MCF 10A (cell line): ENCODE measurements at regions of chr13 and their contacts with region 1.

Region 1: GRCh38 chr13:23888658-23889614 is at the start of gene MIPEP:
- DNase-seq: peak; percentile 95
- H3K4me3 Mint-ChIP-seq: peak within 1 kb of the TSS; percentile 89
- H3K27ac Mint-ChIP-seq: peak within 1 kb of the TSS; percentile 67
- H3K4me1 Mint-ChIP-seq: peaks cover 11% of the 10 kb centered on the region
- H3K27me3 Mint-ChIP-seq: no peaks in the 10 kb centered on the region
- CTCF ChIP-seq: peak; percentile 58
- total RNA-seq, gene MIPEP: 19.1 and 24.7 TPM in 2 replicates

Region 2: GRCh38 chr13:23375001-23375971 is 513.6 kb before region 1 on chr13:
- CTCF ChIA-PET with region 1: interaction called, 3 read pairs
- POLR2A ChIA-PET with region 1: no interaction called
- intact Hi-C with region 1: loop called (anchors 5 kb)
- DNase-seq: peak; percentile 91
- H3K4me3 Mint-ChIP-seq: peak overlapping the region; percentile 69
- H3K27ac Mint-ChIP-seq: no peak overlapping the region
- H3K4me1 Mint-ChIP-seq: peaks cover 40% of the 10 kb centered on the region
- H3K27me3 Mint-ChIP-seq: no peaks in the 10 kb centered on the region
- CTCF ChIP-seq: no peak

Region 3: GRCh38 chr13:23579072-23579895 is 309.7 kb before region 1 on chr13:
- CTCF ChIA-PET with region 1: interaction called, 3 read pairs
- POLR2A ChIA-PET with region 1: no interaction called
- intact Hi-C with region 1: loop called (anchors 5 kb)
- DNase-seq: peak; percentile 79
- H3K4me3 Mint-ChIP-seq: peak overlapping the region; percentile 69
- H3K27ac Mint-ChIP-seq: no peak overlapping the region
- H3K4me1 Mint-ChIP-seq: peaks cover 6% of the 10 kb centered on the region
- H3K27me3 Mint-ChIP-seq: peaks cover 47% of the 10 kb centered on the region
- CTCF ChIP-seq: no peak

Region 4: DNA sequence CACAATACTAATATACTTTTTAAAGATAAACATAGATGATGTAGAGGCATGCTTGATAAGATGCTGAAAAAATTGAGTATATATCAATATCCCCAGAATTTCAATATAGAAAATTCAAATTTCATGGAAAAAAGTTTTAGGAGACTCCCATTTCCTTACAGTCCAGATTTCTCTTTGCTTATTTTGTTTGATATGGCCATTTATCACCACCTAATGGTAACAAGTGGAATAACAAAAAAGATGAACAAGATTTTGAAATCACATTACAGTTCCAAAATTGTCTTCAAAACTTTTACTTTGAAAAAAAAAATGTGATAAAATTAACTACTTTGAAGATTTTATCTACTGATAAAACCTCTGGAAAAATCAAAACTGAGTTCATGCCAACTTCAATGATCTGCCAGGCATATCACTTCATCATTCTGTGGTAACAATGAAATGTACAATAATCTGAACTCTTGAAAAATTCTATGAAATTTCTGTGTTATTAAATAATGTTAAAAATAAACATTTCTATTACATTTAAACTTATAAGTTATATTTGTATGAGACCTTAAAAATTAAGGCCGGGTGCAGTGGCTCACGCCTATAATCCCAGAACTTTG is 17.2 kb before region 1 on chr13:
- CTCF ChIA-PET with region 1: interaction called, 9 read pairs
- POLR2A ChIA-PET with region 1: interaction called, 20 read pairs
- intact Hi-C with region 1: no loop called
- DNase-seq: peak; percentile 56
- H3K4me3 Mint-ChIP-seq: no peak overlapping the region
- H3K27ac Mint-ChIP-seq: no peak overlapping the region
- H3K4me1 Mint-ChIP-seq: no peaks in the 10 kb centered on the region
- H3K27me3 Mint-ChIP-seq: no peaks in the 10 kb centered on the region
- CTCF ChIP-seq: peak; percentile 43

Region 5: DNA sequence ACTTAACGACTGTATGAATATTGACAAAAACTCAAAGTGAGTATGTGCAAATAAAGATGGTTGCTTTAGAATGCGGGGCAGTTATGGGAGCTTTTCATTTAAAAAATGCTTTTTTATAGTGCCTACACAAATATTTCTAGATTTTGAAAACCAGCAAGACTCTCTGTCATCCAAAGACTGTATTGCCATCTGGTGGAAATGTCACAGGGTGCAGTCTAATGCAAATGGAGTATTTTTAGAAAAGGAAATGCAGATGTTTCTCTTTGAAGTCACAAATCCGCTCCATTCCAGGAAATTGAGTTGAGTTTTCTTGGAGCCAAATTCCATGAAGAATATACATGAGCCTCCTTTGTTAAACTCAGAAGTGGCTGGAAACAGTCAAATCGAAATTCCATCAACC is 10.6 kb after region 1 on chr13:
- CTCF ChIA-PET with region 1: interaction called, 40 read pairs
- POLR2A ChIA-PET with region 1: interaction called, 6 read pairs
- intact Hi-C with region 1: no loop called
- DNase-seq: peak; percentile 52
- H3K4me3 Mint-ChIP-seq: no peak overlapping the region
- H3K27ac Mint-ChIP-seq: no peak overlapping the region
- H3K4me1 Mint-ChIP-seq: no peaks in the 10 kb centered on the region
- H3K27me3 Mint-ChIP-seq: peaks cover 8% of the 10 kb centered on the region
- CTCF ChIP-seq: peak; percentile 47

Region 6: DNA sequence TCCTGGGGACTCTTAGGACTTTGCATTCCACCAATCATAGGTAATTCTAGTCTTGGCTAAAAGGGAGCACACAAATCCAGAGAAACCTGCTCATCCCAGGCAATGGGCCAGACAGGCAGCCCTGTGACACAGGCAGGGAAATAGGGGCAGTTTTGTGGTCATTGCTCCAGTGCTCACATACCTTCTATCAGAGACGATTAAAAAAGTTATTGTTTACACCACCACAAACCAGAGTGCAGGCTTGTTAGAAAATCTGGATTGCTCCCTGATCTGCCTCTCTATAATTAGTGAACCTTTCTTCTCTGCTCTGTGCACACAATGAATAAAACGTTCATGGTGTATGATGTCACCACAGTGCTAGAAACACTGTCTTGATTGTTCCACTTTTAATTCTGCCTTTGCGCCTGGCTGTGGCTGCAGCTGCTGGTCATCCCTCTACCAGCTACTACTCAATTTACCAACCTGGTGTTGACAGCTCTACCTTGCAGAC is 149.9 kb after region 1 on chr13:
- CTCF ChIA-PET with region 1: no interaction called
- POLR2A ChIA-PET with region 1: no interaction called
- intact Hi-C with region 1: no loop called
- DNase-seq: no peak
- H3K4me3 Mint-ChIP-seq: no peak overlapping the region
- H3K27ac Mint-ChIP-seq: no peak overlapping the region
- H3K4me1 Mint-ChIP-seq: no peaks in the 10 kb centered on the region
- H3K27me3 Mint-ChIP-seq: no peaks in the 10 kb centered on the region
- CTCF ChIP-seq: no peak